Dorsolateral prefrontal cortex (tissue), 120 donors: ENCODE measurements at regions of chr21 and their contacts with region 1.

Region 1: DNA sequence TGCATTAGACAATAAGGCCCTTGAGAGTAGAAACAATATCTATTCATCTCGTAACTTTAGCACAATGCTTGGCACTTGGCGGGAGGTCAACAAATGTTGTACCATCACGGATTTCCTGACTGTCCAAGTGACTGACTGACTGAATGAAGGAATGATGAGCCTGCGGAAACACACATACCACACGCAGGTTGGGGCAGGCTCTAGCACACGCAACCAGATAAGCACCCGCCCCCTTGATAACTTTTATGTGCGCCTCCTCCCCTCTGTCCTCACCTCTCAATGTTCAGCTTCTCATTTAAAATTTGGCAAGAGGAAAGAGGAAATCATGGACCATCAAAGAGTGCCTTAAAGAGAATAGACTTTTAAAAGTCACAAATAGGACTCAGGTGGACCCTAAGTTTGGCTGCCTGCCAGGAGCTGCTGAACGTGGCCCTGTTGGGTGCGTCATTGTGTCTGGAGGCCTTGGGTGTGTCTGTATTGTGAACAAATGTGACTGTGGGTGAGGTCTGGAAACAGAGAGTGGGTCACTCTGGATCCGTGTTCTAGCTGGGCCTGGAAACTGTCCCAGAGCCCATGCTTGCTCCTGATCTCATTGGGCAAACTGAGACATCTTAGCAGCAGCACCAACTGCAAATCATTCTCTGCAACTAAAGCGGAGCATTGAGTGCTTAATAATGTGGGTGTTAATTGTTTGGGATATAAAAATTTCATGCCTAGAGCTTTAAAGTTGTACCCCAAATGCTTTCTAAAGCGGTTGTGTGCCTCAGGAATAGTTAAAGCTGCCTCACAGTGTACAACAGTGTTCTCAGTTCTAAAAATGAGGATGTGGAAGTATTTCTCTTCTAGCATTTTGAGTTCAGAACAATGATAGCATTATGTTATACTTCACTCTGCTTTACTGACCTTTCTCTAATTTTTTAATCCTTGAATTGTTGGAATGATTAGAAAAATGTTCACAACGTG is 47.6 kb upstream of the ABCG1 start:
- DNase-seq: peak in 6 of 10 donors; percentile 61 to 93 (median 76)
- H3K4me3 ChIP-seq: peak overlapping the region in 9 of 59 donors; percentile 2 to 37 (median 15)
- H3K27ac ChIP-seq: peak overlapping the region; percentile 7 to 98 (median 91)
- H3K27me3 ChIP-seq: no peaks in the 10 kb centered on the region
- CTCF ChIP-seq: peak in 3 of 56 donors; percentile 4 to 11 (median 7)

Region 2: GRCh38 chr21:42258153-42258884 is 86.9 kb after region 1 on chr21:
- intact Hi-C with region 1: loop called (anchors 5 kb)
- DNase-seq: peak; percentile 52 to 87 (median 83)
- H3K4me3 ChIP-seq: peak overlapping the region in 1 of 59 donors; percentile 18
- H3K27ac ChIP-seq: peak overlapping the region in 50 of 59 donors; percentile 1 to 91 (median 68)
- H3K27me3 ChIP-seq: no peaks in the 10 kb centered on the region
- CTCF ChIP-seq: peak; percentile 43 to 94 (median 87)